CD8-positive, alpha-beta T cell (primary cell): ENCODE measurements at regions of chr7 and their contacts with region 1.

Region 1: DNA sequence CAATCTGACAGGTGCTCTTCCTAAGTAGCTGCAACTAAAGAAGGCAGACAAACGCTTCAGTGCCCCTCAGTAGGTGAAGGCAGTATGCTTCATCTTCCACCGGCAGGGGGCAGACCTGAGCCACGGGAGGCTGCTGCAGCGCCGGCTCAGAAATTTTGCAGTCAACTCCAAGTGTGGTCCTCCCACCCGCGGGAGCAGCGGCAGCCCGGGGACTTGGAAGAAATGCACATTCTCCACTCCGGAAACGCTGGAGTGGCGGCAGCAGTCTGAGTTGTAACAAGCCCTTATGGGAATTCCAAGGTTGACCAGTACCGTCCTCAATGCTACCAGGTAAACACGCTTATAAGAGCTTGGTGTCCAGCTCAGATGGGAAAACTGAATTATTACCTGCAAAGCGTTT is 3.4 kb downstream of the IGFBP3 start:
- DNase-seq: peak; percentile 34 to 84 (median 69)
- ATAC-seq: peak; percentile 44
- H3K4me3 ChIP-seq: no peak overlapping the region
- H3K4me3 Mint-ChIP-seq: no peak overlapping the region
- H3K27ac ChIP-seq: no peak overlapping the region
- H3K27ac Mint-ChIP-seq: no peak overlapping the region
- H3K4me1 ChIP-seq: peaks cover 29% of the 10 kb centered on the region
- H3K4me1 Mint-ChIP-seq: peaks cover 13% of the 10 kb centered on the region
- H3K27me3 ChIP-seq: peaks cover 0 to 5% of the 10 kb centered on the region in 2 experiments
- H3K27me3 Mint-ChIP-seq: peaks cover 57% of the 10 kb centered on the region
- CTCF ChIP-seq: peak; percentile 77

Region 2: GRCh38 chr7:45610019-45610418 is 307.6 kb before region 1 on chr7:
- CTCF ChIA-PET with region 1: no interaction called
- POLR2A ChIA-PET with region 1: no interaction called
- intact Hi-C with region 1: no loop called
- DNase-seq: peak in 1 of 9 experiments; percentile 25
- ATAC-seq: no peak
- H3K4me3 ChIP-seq: no peak overlapping the region
- H3K4me3 Mint-ChIP-seq: no peak overlapping the region
- H3K27ac ChIP-seq: no peak overlapping the region
- H3K27ac Mint-ChIP-seq: no peak overlapping the region
- H3K4me1 ChIP-seq: no peaks in the 10 kb centered on the region
- H3K4me1 Mint-ChIP-seq: no peaks in the 10 kb centered on the region
- H3K27me3 ChIP-seq: no peaks in the 10 kb centered on the region
- H3K27me3 Mint-ChIP-seq: peaks cover 12% of the 10 kb centered on the region
- CTCF ChIP-seq: no peak

Region 3: GRCh38 chr7:46352004-46352954 is 434.6 kb after region 1 on chr7:
- CTCF ChIA-PET with region 1: interaction called, 3 read pairs
- POLR2A ChIA-PET with region 1: no interaction called
- intact Hi-C with region 1: loop called in 1 of 2 experiments (anchors 1 kb)
- DNase-seq: peak in 3 of 9 experiments; percentile 31 to 51 (median 48)
- ATAC-seq: no peak
- H3K4me3 ChIP-seq: no peak overlapping the region
- H3K4me3 Mint-ChIP-seq: no peak overlapping the region
- H3K27ac ChIP-seq: no peak overlapping the region
- H3K27ac Mint-ChIP-seq: no peak overlapping the region
- H3K4me1 ChIP-seq: no peaks in the 10 kb centered on the region
- H3K4me1 Mint-ChIP-seq: no peaks in the 10 kb centered on the region
- H3K27me3 ChIP-seq: no peaks in the 10 kb centered on the region
- H3K27me3 Mint-ChIP-seq: no peaks in the 10 kb centered on the region
- CTCF ChIP-seq: peak; percentile 30

Region 4: GRCh38 chr7:47179812-47180515 is 1262.3 kb after region 1 on chr7:
- CTCF ChIA-PET with region 1: no interaction called
- POLR2A ChIA-PET with region 1: no interaction called
- intact Hi-C with region 1: loop called in 1 of 2 experiments (anchors 5 kb)
- DNase-seq: peak in 2 of 9 experiments; percentile 7 to 15
- ATAC-seq: no peak
- H3K4me3 ChIP-seq: no peak overlapping the region
- H3K4me3 Mint-ChIP-seq: no peak overlapping the region
- H3K27ac ChIP-seq: no peak overlapping the region
- H3K27ac Mint-ChIP-seq: no peak overlapping the region
- H3K4me1 ChIP-seq: no peaks in the 10 kb centered on the region
- H3K4me1 Mint-ChIP-seq: no peaks in the 10 kb centered on the region
- H3K27me3 ChIP-seq: no peaks in the 10 kb centered on the region
- H3K27me3 Mint-ChIP-seq: peaks cover 3% of the 10 kb centered on the region
- CTCF ChIP-seq: no peak

Region 5: DNA sequence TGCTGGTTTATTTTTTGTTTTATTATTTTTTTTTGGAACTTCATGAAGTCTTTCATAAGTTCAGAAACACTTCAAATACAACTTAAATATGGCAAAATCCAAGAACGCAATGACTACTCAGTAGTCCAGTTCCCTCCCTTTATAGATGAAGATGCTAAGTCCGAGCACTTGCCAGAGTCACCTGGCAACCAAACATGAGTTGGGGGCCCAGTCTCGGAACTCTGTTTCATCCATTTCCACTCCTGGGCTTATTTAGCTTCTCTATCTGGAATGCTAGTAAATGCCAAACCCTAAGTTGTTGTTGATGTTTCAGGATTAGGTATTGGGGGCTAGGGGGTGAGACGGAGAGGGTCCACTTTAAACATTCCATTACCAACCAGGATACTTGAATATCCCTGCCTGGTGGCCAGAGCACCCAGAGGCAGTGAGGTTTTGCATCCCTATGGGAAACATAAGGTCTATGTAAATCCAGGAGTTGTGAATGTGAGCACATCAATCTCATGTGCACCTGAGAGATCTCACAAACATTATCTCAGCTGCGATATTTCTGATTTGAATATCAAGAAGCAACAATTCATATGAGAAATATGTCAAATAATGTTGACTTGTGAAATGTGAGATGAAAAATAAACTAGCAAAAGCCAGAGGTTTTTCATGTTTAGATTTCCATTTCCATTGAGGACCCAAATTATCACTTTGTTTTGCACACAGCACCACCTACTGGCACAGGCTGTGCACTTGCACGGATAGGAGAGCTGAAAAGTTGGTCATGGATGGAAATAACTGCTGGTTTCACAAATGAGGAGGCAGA is 1901.3 kb after region 1 on chr7:
- CTCF ChIA-PET with region 1: interaction called, 3 read pairs
- POLR2A ChIA-PET with region 1: no interaction called
- intact Hi-C with region 1: loop called in 1 of 2 experiments (anchors 1 kb)
- DNase-seq: peak in 5 of 9 experiments; percentile 4 to 53 (median 37)
- ATAC-seq: no peak
- H3K4me3 ChIP-seq: no peak overlapping the region
- H3K4me3 Mint-ChIP-seq: no peak overlapping the region
- H3K27ac ChIP-seq: no peak overlapping the region
- H3K27ac Mint-ChIP-seq: no peak overlapping the region
- H3K4me1 ChIP-seq: no peaks in the 10 kb centered on the region
- H3K4me1 Mint-ChIP-seq: no peaks in the 10 kb centered on the region
- H3K27me3 ChIP-seq: no peaks in the 10 kb centered on the region
- H3K27me3 Mint-ChIP-seq: no peaks in the 10 kb centered on the region
- CTCF ChIP-seq: peak; percentile 75